Lower leg skin (tissue), 4 donors: ENCODE measurements at regions of chr14 and their contacts with region 1.

Region 1: DNA sequence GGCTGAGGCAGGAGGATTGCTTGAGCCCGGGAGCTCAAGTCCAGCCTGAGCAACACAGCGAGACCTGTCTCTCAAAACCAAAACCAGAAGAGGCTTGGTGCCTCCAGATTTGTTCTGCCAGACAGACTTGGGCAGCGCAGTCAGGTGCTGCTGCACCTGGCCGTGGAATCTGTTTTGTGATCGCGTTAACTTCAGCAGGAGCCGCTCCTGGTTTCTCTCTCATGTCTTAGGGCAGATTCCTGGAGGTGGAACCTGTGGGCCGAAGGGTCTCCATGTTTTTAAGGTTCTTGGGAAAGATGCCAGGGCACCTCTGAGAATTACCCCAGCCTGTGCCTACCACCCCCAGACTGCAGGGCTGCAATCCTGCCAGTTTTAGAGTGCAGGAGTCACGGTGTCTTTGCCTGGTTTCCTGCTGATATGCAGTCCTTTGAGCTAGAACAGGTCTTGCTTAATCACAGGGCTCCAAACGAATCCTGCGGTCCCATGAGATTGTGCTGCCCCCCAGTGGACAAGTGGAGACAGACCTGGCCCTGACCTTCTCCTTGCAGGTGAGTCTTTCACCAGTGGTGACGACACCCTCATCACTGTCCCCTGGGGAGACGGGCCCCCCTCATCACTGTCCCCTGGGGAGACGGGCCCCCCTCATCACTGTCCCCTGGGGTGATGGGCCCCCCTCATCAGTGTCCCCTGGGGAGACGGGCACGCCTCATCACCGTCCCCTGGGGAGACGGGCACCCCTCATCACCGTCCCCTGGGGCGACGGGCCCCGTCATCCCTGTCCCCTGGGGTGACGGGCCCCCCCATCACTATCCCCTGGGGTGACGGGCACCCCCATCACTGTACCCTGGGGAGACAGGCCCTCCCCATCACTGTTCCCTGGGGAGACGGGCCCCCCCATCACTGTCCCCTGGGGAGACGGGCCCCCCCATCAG is 37.6 kb downstream of the PACS2 start:
- DNase-seq: peak; percentile 85 to 96
- H3K4me3 ChIP-seq: no peak overlapping the region
- CTCF ChIP-seq: peak in 1 of 3 donors; percentile 76
- POLR2A ChIP-seq: no peak

Region 2: DNA sequence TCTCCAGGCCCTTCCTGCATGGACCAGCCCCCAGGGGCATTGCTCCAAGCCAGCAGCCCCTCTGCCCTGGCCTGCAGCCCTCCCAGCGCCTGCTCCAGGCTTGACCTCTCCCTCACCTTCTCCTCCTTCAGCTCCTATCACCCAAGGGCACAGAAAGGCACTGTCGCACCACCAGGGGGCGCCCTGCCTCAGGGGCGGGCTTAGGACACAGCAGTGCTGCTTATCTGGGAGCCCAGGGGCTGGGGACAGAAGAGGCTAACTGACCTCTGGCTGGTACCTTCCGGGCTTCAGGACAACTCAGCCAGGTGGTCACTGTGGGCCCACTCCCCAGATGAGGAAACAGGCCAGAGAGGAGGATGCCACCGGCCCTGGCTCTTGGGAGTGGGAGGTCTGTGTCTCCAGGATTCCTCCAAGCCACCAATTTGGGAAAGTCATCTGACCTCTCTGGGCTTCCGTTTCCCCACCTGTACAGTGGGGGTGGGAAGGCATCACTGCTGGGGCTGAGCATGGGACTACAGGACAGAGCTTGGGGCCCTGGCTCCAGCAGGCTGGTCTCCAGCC is 261.6 kb before region 1 on chr14:
- intact Hi-C with region 1: loop called (anchors 10 kb)
- DNase-seq: peak in 1 of 2 donors; percentile 97
- H3K4me3 ChIP-seq: no peak overlapping the region
- CTCF ChIP-seq: peak in 1 of 3 donors; percentile 65
- POLR2A ChIP-seq: no peak

Region 3: DNA sequence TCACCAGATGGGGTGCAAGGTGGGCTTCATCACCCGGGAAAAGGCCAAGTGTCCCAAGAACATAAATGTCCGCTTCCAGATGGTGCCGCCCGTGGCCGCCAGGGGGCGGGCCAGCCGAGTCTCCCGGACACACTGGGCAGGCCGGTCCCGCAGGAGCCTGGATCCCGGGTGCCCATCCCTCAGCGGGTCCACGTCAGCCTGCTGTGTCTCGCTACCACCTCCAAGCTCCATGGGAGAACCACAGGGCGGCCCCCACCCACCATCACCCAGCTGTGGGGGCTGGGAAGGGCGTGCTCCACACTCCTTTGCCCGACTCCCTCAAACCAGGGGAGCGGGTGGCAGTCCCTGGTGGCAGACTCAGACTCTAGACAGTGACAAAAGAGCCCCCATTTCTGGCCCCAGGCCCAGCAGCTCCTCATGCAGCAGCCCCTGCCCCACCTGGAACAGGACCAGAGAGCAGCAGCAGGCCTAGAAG is 149.1 kb before region 1 on chr14:
- intact Hi-C with region 1: loop called (anchors 5 kb)
- DNase-seq: peak; percentile 66 to 94
- H3K4me3 ChIP-seq: no peak overlapping the region
- CTCF ChIP-seq: peak in 1 of 3 donors; percentile 68
- POLR2A ChIP-seq: no peak

Region 4: DNA sequence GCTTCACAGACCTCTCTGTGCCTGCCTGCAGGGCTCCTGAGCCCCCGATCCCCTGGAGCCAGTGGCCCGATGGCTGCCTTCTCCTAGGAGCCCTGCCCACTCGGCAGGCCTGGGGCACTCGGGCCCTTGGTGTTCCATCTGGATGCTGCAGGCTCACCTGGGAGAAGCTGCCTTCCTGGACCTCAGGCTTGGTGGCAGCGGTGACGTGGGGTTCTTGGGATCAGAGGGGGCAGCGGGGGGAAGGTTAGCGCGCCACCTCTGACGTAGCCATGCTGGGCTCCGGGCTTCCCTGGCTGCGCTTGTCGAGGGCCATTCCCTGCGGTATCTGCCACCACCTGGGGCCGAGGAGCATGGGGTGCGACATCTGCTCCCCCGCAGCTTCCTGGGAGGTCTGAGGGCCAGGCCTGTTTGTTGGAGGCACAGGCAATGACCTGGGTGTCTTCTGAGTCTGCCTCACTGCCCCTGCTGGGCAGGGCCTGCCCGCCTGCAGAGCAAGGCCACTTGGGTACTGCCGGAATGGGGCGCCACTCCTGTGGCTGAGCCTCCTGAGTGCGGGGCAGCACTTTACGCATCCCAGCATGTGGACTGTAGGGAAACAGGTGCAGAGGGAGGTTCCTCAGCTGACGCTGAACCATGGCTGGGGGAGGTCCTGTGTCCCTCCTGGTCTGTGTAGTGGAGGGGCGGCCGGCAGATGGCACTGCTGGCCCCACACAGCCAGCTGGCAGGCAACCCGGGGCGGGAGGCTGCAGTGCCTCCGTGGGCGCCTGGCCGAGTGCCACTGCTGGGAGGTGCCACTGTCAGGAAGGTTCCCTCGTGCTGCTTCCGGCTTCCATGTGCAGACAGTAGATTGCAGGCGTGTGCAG is 87.7 kb after region 1 on chr14:
- intact Hi-C with region 1: no loop called
- DNase-seq: no peak
- H3K4me3 ChIP-seq: no peak overlapping the region
- CTCF ChIP-seq: no peak
- POLR2A ChIP-seq: no peak